ENCODE measurements at regions of chr1 and their contacts with region 1.

Region 1: DNA sequence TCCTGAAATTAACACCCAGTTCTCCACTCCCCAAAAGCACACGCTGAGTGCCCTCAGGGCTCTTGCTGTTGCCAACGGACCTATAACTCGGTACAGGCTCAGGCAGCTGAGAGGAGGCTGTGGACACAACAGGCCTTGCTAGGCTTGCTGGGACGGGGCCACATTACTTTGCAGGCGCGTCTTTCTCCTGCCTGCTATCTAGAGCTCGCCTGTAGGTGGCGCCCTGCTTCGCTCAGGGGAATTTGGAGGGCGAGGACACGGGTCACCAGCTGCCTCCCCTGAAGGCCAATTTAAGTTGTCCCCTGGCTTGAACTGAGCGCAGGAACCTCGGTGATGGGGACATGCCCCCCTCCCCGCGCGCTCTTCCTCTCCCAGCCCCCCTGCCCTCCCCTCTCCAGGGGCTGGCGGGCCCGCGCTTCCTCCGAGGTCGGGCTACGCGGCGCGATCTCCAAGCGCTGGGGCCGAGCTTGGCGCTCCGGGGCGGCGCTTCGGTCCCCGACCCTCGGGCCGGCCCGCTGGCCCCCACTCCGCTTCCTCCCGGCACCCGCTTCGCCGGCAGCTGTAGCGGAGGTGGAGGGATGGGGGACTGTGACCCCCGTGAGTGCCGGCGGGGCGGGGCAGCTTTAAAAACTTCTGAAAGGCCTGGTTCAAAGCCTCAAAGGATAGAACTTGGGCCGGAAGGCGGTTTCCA is 32.4 kb upstream of the NFIA start:
- DNase-seq: peak; percentile 89
- ATAC-seq: peak; percentile 87
- H3K4me3 ChIP-seq: peak overlapping the region in 4 of 5 experiments; percentile 52 to 77 (median 72)
- H3K4me3 Mint-ChIP-seq: peak overlapping the region; percentile 86
- H3K27ac ChIP-seq: no peak overlapping the region
- H3K27ac Mint-ChIP-seq: peak overlapping the region; percentile 32
- H3K4me1 ChIP-seq: peaks cover 33 to 37% of the 10 kb centered on the region in 2 donors
- H3K4me1 Mint-ChIP-seq: peaks cover 29% of the 10 kb centered on the region
- H3K27me3 ChIP-seq: peaks cover 0 to 52% (median 48%) of the 10 kb centered on the region in 4 experiments
- H3K27me3 Mint-ChIP-seq: peaks cover 57% of the 10 kb centered on the region
- CTCF ChIP-seq: peak; percentile 94

Region 2: GRCh38 chr1:59971464-59971911 is 1078.5 kb before region 1 on chr1:
- CTCF ChIA-PET with region 1: interaction called, 3 read pairs
- POLR2A ChIA-PET with region 1: no interaction called
- intact Hi-C with region 1: loop called (anchors 10 kb)
- DNase-seq: peak; percentile 49
- ATAC-seq: no peak
- H3K4me3 ChIP-seq: no peak overlapping the region
- H3K4me3 Mint-ChIP-seq: no peak overlapping the region
- H3K27ac ChIP-seq: no peak overlapping the region
- H3K27ac Mint-ChIP-seq: no peak overlapping the region
- H3K4me1 ChIP-seq: peaks cover 3 to 5% of the 10 kb centered on the region in 2 donors
- H3K4me1 Mint-ChIP-seq: peaks cover 5% of the 10 kb centered on the region
- H3K27me3 ChIP-seq: peaks cover 0 to 8% (median 3%) of the 10 kb centered on the region in 4 experiments
- H3K27me3 Mint-ChIP-seq: peaks cover 34% of the 10 kb centered on the region
- CTCF ChIP-seq: peak; percentile 80

Region 3: GRCh38 chr1:60936163-60936562 is 113.8 kb before region 1 on chr1:
- CTCF ChIA-PET with region 1: no interaction called
- POLR2A ChIA-PET with region 1: no interaction called
- intact Hi-C with region 1: no loop called
- DNase-seq: no peak
- ATAC-seq: no peak
- H3K4me3 ChIP-seq: no peak overlapping the region
- H3K4me3 Mint-ChIP-seq: no peak overlapping the region
- H3K27ac ChIP-seq: no peak overlapping the region
- H3K27ac Mint-ChIP-seq: no peak overlapping the region
- H3K4me1 ChIP-seq: no peaks in the 10 kb centered on the region
- H3K4me1 Mint-ChIP-seq: no peaks in the 10 kb centered on the region
- H3K27me3 ChIP-seq: no peaks in the 10 kb centered on the region
- H3K27me3 Mint-ChIP-seq: peaks cover 8% of the 10 kb centered on the region
- CTCF ChIP-seq: no peak

Region 4: DNA sequence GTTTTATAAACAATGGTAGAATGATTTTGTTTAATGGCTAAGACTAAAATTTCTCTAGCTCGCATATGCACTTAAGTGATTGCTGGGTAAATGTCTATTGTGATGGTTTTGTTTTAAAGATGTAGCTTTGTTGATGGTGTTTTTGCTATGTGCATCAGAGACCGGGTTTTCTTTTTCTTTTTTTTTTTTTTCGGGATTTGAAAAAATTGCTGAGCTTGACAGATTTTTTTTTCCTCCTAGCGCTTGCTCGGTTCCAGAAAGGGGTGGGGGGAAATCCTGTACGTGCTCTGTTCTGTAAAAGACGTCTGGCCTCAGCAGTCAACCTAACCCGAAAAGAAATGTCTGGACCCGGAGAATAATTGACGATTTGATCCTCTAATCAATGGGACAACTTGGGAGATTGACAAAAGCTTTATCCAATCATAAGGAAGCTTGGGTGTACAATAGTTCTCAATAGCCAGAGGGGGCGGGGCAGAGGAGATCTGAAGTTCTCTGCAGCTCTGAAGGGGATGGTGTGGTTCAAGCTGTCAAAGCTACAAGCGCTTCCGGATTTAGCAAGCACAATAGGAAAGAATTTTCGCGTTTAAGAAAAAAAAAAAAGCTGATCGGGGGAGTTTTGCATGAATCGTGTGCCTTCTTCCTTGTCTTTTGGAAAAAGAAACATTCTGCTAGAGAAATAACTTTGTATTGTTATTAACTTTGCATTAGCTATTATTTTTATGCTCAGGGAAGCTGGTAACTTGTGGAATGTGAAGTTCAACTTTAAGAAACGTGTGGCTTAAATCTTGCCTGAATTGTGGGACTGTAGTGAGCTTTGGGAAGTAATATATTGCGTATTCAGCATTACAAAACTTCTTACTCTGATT is 27.9 kb after region 1 on chr1:
- CTCF ChIA-PET with region 1: interaction called, 40 read pairs
- POLR2A ChIA-PET with region 1: interaction called, 5 read pairs
- intact Hi-C with region 1: loop called (anchors 1 kb)
- DNase-seq: peak; percentile 91
- ATAC-seq: peak; percentile 42
- H3K4me3 ChIP-seq: peak overlapping the region; percentile 54 to 98 (median 67)
- H3K4me3 Mint-ChIP-seq: peak overlapping the region; percentile 92
- H3K27ac ChIP-seq: peak overlapping the region; percentile 71 to 83
- H3K27ac Mint-ChIP-seq: peak overlapping the region; percentile 75
- H3K4me1 ChIP-seq: peaks cover 33% of the 10 kb centered on the region in 2 donors
- H3K4me1 Mint-ChIP-seq: peaks cover 36% of the 10 kb centered on the region
- H3K27me3 ChIP-seq: peaks cover 0 to 40% (median 33%) of the 10 kb centered on the region in 4 experiments
- H3K27me3 Mint-ChIP-seq: peaks cover 35% of the 10 kb centered on the region
- CTCF ChIP-seq: no peak

Region 5: GRCh38 chr1:61202854-61203598 is 153.0 kb after region 1 on chr1:
- CTCF ChIA-PET with region 1: interaction called, 20 read pairs
- POLR2A ChIA-PET with region 1: no interaction called
- intact Hi-C with region 1: loop called (anchors 10 kb)
- DNase-seq: no peak
- ATAC-seq: no peak
- H3K4me3 ChIP-seq: no peak overlapping the region
- H3K4me3 Mint-ChIP-seq: no peak overlapping the region
- H3K27ac ChIP-seq: no peak overlapping the region
- H3K27ac Mint-ChIP-seq: no peak overlapping the region
- H3K4me1 ChIP-seq: no peaks in the 10 kb centered on the region
- H3K4me1 Mint-ChIP-seq: no peaks in the 10 kb centered on the region
- H3K27me3 ChIP-seq: peaks cover 0 to under 1% (median 0%) of the 10 kb centered on the region in 4 experiments
- H3K27me3 Mint-ChIP-seq: peaks cover 8% of the 10 kb centered on the region
- CTCF ChIP-seq: no peak

Region 6: DNA sequence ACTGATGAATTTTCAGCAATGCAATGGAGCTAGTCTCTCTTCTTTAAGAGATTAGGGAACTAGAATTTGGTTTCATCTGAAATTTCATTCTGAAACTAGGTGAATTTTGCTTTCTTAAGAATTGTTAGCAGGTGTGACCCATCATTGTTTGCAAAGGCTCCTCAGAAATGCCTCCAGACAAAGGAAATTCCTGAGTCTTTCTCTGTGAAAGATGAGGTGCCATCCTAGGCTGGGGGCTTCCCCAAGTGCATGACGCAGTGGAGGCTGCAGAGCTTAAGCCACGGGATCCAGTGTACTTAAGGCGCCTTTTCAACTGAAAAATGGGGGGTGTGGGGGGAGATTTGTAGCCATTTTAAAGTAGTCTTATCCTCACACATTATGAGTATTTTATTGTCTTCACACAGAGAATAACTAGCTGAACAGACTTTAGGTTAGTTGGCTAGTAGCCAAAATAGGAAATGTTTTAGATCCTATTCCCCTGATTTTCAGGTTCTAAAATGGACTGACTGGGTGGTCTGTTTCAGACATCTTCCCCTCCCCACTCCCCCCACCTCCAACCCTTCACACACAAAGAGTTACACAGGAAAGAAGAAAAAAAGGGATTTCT is 234.4 kb after region 1 on chr1:
- CTCF ChIA-PET with region 1: no interaction called
- POLR2A ChIA-PET with region 1: no interaction called
- intact Hi-C with region 1: loop called (anchors 5 kb)
- DNase-seq: no peak
- ATAC-seq: no peak
- H3K4me3 ChIP-seq: no peak overlapping the region
- H3K4me3 Mint-ChIP-seq: no peak overlapping the region
- H3K27ac ChIP-seq: no peak overlapping the region
- H3K27ac Mint-ChIP-seq: no peak overlapping the region
- H3K4me1 ChIP-seq: no peaks in the 10 kb centered on the region
- H3K4me1 Mint-ChIP-seq: peaks cover 5% of the 10 kb centered on the region
- H3K27me3 ChIP-seq: no peaks in the 10 kb centered on the region
- H3K27me3 Mint-ChIP-seq: peaks cover 15% of the 10 kb centered on the region
- CTCF ChIP-seq: no peak

Region 7: GRCh38 chr1:61588736-61589672 is 539.0 kb after region 1 on chr1:
- CTCF ChIA-PET with region 1: interaction called, 23 read pairs
- POLR2A ChIA-PET with region 1: no interaction called
- intact Hi-C with region 1: no loop called
- DNase-seq: peak; percentile 49
- ATAC-seq: peak; percentile 57
- H3K4me3 ChIP-seq: no peak overlapping the region
- H3K4me3 Mint-ChIP-seq: no peak overlapping the region
- H3K27ac ChIP-seq: no peak overlapping the region
- H3K27ac Mint-ChIP-seq: no peak overlapping the region
- H3K4me1 ChIP-seq: no peaks in the 10 kb centered on the region
- H3K4me1 Mint-ChIP-seq: no peaks in the 10 kb centered on the region
- H3K27me3 ChIP-seq: no peaks in the 10 kb centered on the region
- H3K27me3 Mint-ChIP-seq: peaks cover 6% of the 10 kb centered on the region
- CTCF ChIP-seq: peak; percentile 79

Region 8: DNA sequence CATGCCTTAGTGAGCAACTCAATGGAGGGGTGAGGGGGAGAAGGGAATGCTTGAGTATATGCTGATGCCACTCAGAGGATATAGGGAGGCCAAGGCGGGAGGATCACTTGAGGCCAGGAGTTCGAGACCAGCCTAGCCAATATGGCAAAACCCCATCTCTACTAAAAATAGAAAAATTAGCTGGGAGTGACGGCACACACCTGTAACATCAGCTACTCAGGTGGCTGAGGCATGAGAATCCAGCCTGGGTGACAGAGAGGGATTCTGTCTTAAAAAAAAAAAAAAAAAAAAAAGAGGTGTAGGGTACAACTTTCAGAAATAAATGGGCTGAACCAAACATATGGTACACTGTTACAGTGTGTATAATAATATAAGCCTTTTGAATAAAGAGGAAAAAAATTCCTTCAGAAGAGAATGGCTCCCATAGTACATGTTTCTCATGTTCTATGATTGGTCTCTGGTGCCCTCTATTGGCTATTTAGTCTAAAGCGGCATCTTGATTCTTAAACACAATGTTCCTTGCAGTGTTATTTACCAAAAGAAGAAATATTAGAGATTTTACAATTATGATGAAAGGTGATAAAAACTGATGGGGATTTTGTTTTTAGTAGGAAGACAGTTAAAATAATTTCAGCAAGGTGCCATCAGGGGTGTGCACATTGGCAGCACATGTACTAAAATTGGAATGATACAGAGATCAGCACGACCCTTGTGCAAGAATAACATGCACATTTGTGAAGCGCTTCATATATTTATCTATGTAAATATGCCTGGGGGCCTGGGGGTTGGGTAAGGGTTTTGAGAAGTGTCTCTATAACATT is 802.1 kb after region 1 on chr1:
- CTCF ChIA-PET with region 1: interaction called, 6 read pairs
- POLR2A ChIA-PET with region 1: no interaction called
- intact Hi-C with region 1: loop called (anchors 5 kb)
- DNase-seq: peak; percentile 59
- ATAC-seq: no peak
- H3K4me3 ChIP-seq: no peak overlapping the region
- H3K4me3 Mint-ChIP-seq: no peak overlapping the region
- H3K27ac ChIP-seq: no peak overlapping the region
- H3K27ac Mint-ChIP-seq: no peak overlapping the region
- H3K4me1 ChIP-seq: no peaks in the 10 kb centered on the region
- H3K4me1 Mint-ChIP-seq: no peaks in the 10 kb centered on the region
- H3K27me3 ChIP-seq: no peaks in the 10 kb centered on the region
- H3K27me3 Mint-ChIP-seq: no peaks in the 10 kb centered on the region
- CTCF ChIP-seq: peak; percentile 86

Measured in B cell (primary cell).